ENCODE measurements at regions of chr5 and their contacts with region 1.

Region 1: GRCh38 chr5:157858527-157859226 is at the start of gene CLINT1:
- DNase-seq: peak; percentile 88
- CTCF ChIP-seq: peak; percentile 9

Region 2: GRCh38 chr5:157835041-157835440 is 23.6 kb before region 1 on chr5:
- CTCF ChIA-PET with region 1: interaction called, 16 read pairs
- POLR2A ChIA-PET with region 1: interaction called, 6 read pairs
- DNase-seq: no peak
- CTCF ChIP-seq: no peak

Region 3: DNA sequence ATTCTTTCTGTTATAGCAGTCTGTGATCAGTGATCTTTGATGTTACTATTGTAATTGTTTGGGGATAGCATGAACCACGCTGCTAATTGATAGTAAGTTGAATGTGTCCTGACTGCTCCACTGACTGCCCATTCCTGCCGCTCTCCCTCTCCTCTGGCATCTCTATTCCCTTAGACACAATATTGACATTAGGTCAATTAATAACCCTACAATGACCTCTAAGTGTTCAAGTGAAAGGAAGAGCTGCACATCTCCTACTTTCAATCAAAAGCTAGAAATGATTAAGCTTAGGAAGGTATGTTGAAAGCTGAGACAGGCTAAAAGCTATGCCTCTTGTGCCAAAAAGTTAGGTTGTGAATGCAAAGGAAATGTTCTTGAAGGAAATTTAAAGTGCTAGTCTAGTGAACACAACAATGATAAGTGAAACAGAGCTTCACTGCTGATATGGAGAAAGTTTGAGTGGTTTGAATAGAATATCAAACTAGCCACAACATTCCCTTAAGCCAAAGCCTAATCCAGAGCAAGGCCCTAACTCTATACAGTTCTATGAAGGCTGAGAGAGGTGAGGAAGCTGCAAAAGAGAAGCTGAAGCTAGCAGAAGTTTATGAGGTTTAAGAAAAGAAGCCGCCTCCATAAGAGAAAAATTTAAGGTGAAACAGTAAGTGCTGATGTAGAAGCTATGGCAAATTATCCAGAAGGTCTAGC is 12.6 kb before region 1 on chr5:
- CTCF ChIA-PET with region 1: interaction called, 12 read pairs
- POLR2A ChIA-PET with region 1: interaction called, 8 read pairs
- DNase-seq: no peak
- CTCF ChIP-seq: no peak

Region 4: GRCh38 chr5:157907479-157907878 is 48.8 kb after region 1 on chr5:
- CTCF ChIA-PET with region 1: no interaction called
- POLR2A ChIA-PET with region 1: no interaction called
- DNase-seq: no peak
- CTCF ChIP-seq: no peak

Region 5: DNA sequence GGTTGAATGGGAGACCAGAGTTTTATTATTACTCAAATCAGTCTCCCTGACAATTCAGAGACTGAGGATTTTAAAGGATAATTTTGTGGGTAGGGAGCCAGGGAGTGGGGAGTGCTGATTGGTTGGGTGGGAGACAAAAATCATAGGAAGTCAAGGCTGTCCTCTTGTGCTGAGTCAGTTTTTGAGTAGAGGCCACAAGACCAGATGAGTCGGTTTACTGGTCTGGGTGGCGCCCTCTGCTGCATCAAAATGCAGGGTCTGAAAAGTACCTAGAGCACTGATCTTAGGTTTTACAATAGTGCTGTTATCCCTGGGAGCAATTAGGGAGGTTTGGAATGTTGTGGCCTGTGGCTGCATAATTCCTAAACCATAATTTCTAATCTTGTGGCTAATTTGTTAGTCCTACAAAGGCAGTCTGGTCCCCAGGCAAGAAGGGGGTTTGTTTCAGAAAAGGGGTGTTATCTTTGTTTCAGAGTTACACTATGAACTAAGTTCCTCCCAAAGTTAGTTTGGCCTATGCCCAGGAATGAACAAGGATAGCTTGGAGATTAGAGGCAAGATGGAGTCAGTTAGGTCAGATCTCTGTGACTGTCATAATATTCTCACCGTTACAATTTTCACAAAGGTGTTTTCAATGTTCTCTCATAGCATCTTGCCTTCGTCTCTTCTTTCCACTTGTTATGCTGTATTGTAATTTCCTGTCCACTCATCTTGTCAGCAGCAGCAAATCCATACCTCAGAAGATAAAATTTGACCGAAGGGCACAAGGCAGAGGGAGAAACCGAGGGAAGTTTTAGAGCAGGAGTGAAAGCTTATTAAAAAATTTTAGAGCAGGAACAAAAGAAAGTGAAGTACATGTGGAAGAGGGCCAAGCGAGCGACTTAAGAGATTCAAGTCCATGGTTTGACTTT is 59.5 kb after region 1 on chr5:
- CTCF ChIA-PET with region 1: interaction called, 15 read pairs
- POLR2A ChIA-PET with region 1: no interaction called
- DNase-seq: peak; percentile 56
- CTCF ChIP-seq: peak; percentile 63

Region 6: GRCh38 chr5:157971571-157972216 is 113.0 kb after region 1 on chr5:
- CTCF ChIA-PET with region 1: no interaction called
- POLR2A ChIA-PET with region 1: interaction called, 13 read pairs
- DNase-seq: no peak
- CTCF ChIP-seq: no peak